ENCODE measurements at regions of chr1 and their contacts with region 1.

Region 1: GRCh38 chr1:202046227-202046801 is 35.9 kb downstream of the ELF3 start:
- DNase-seq: peak; percentile 98
- H3K4me3 Mint-ChIP-seq: peak overlapping the region; percentile 57
- H3K27ac Mint-ChIP-seq: peak overlapping the region; percentile 99
- H3K4me1 Mint-ChIP-seq: peaks cover 83% of the 10 kb centered on the region
- H3K27me3 Mint-ChIP-seq: no peaks in the 10 kb centered on the region
- CTCF ChIP-seq: no peak

Region 2: DNA sequence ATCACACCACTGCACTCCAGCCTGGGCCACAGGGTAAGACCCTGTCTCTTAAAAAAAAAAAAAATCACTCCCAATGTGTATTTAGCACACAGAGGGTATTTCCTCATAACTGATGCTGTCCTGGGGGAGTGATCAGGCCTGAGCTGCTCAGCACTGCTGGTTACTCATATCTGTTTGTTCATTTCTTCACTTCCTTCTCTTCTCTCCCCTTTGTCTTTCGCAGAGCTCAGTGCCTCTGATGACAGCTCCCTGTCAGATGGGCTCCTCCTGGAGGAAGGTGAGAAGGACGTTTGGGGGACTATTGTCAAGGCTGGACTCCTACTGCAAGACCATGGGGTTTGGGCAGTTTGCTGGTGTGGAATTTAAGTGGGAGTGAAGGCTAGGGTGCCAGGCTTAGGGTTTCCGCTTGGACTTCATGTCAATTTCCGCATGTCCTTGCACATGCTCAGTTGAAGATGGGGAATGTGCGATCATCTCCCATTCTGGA is 1138.7 kb before region 1 on chr1:
- CTCF ChIA-PET with region 1: no interaction called
- intact Hi-C with region 1: no loop called
- DNase-seq: no peak
- H3K4me3 Mint-ChIP-seq: peak overlapping the region; percentile 7
- H3K27ac Mint-ChIP-seq: peak overlapping the region; percentile 56
- H3K4me1 Mint-ChIP-seq: peaks cover 21% of the 10 kb centered on the region
- H3K27me3 Mint-ChIP-seq: no peaks in the 10 kb centered on the region
- CTCF ChIP-seq: no peak

Region 3: GRCh38 chr1:202018468-202019255 is 27.7 kb before region 1 on chr1:
- CTCF ChIA-PET with region 1: interaction called, 13 read pairs
- intact Hi-C with region 1: loop called (anchors 1 kb)
- DNase-seq: peak; percentile 95
- H3K4me3 Mint-ChIP-seq: peak overlapping the region; percentile 92
- H3K27ac Mint-ChIP-seq: peak overlapping the region; percentile 89
- H3K4me1 Mint-ChIP-seq: peaks cover 78% of the 10 kb centered on the region
- H3K27me3 Mint-ChIP-seq: no peaks in the 10 kb centered on the region
- CTCF ChIP-seq: no peak

Region 4: GRCh38 chr1:202056644-202057461 is 10.5 kb after region 1 on chr1:
- CTCF ChIA-PET with region 1: interaction called, 28 read pairs
- intact Hi-C with region 1: loop called (anchors 1 kb)
- DNase-seq: peak; percentile 96
- H3K4me3 Mint-ChIP-seq: peak overlapping the region; percentile 4
- H3K27ac Mint-ChIP-seq: peak overlapping the region; percentile 66
- H3K4me1 Mint-ChIP-seq: peaks cover 55% of the 10 kb centered on the region
- H3K27me3 Mint-ChIP-seq: no peaks in the 10 kb centered on the region
- CTCF ChIP-seq: no peak

Region 5: GRCh38 chr1:202090997-202091396 is 44.7 kb after region 1 on chr1:
- CTCF ChIA-PET with region 1: interaction called, 10 read pairs
- intact Hi-C with region 1: no loop called
- DNase-seq: no peak
- H3K4me3 Mint-ChIP-seq: no peak overlapping the region
- H3K27ac Mint-ChIP-seq: peak overlapping the region; percentile 52
- H3K4me1 Mint-ChIP-seq: peaks cover 63% of the 10 kb centered on the region
- H3K27me3 Mint-ChIP-seq: no peaks in the 10 kb centered on the region
- CTCF ChIP-seq: peak; percentile 30

Measured in Calu3 (cell line).